Aorta (tissue), 5 donors: ENCODE measurements at regions of chr9 and their contacts with region 1.

Region 1: DNA sequence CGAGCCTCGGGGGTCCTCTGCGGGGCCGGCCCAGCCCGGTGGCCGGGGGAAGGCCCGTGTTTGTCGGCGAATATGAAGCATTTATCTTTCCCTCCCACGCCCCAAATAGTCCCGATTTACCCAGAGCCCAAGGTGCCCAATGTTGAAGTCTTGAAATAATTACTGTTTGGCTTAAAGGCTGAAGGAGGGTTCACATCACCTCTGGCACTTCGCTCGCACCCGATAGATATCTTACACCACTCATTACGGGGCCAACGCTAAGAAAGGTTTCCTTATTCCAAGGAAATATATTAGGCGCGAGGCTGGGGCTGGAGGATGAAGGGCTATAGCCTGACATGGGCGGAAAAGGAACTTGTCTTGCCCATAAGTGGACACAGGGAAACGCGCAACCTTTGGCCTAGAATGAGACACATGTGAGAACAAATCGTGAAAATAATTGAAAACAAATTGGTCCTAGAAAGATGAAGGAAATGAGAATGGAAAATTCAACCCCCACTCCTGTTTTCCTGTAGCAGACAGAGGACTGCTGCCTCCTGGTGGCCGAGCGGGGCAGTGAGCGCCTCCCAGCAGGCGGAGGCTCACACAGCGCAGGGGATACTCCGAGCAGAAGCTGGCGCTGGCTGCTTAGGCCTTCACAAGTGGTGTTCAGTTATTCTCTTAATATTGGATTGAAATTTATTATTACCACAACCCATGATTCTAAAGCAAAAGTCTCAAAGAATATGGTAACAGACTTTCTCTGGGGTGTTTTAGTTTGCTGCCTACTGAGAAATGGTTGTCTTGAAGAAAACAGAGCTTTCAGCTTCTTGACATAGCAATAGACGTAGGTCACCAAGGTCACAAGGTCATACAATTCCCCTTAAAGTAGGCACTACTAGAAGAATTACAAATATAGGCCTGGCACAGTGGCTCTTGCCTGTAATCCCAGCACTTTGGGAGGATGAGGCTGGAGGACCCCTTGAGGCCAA is 7.9 kb downstream of the CCL21 start:
- DNase-seq: peak; percentile 90 to 97
- ATAC-seq: peak; percentile 96
- H3K4me3 ChIP-seq: peak overlapping the region; percentile 61 to 92
- H3K27ac ChIP-seq: peak overlapping the region; percentile 52 to 68
- H3K4me1 ChIP-seq: no peaks in the 10 kb centered on the region
- H3K27me3 ChIP-seq: no peaks in the 10 kb centered on the region

Region 2: GRCh38 chr9:34637356-34638137 is 64.5 kb before region 1 on chr9 and contains the start of gene SIGMAR1:
- intact Hi-C with region 1: loop called in 1 of 2 experiments (anchors 5 kb)
- DNase-seq: peak; percentile 97 to 98
- ATAC-seq: peak; percentile 98
- H3K4me3 ChIP-seq: peak within 1 kb of the TSS; percentile 19 to 49
- H3K27ac ChIP-seq: peak within 1 kb of the TSS; percentile 6 to 30
- H3K4me1 ChIP-seq: no peaks in the 10 kb centered on the region
- H3K27me3 ChIP-seq: no peaks in the 10 kb centered on the region
- total RNA-seq, gene SIGMAR1: 31.8 to 42.9 TPM

Region 3: DNA sequence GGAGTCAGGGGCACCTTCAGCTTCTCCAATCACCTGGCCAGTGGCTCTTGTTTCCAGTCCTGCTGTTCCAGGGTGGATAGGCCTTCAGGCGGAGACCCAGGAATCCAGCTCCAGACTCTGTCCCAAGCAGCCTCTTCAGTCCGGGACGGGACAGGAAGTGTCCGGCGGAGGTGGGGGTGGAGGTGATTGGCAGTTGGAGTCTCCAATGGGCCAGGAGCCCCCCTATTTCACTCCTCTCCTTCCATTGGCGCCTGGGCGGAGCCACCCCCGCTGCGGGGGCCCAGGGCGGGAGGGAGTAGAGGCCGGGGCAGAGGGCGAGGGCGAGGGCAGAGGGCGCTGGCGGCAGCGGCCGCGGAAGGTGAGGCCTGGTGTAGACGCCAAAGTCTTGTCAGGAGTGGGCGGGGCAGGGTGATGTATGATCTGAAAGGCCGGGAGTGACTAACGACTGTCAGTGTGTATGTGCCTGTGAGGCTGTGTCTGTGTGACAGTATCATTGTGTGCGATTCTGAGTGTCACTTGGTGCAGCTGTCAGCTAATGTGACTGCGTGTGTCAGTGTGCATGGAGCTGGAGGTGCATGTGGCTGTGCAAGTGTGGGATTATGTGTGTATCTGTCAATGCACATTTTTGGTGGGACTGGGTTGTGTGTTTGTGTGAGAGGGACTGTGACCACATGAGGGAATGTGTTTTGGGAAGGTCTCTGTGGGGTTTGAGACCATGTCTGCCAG is 50.0 kb before region 1 on chr9 and contains the start of gene IL11RA:
- intact Hi-C with region 1: loop called in 1 of 2 experiments (anchors 5 kb)
- DNase-seq: peak; percentile 92 to 94
- ATAC-seq: peak; percentile 78
- H3K4me3 ChIP-seq: peak within 1 kb of the TSS; percentile 24 to 47
- H3K27ac ChIP-seq: peak within 1 kb of the TSS; percentile 70 to 72
- H3K4me1 ChIP-seq: peaks cover 0 to 2% of the 10 kb centered on the region in 2 donors
- H3K27me3 ChIP-seq: no peaks in the 10 kb centered on the region
- total RNA-seq, gene IL11RA: 33.7 to 66.4 TPM

Region 4: GRCh38 chr9:34665381-34666250 is 36.4 kb before region 1 on chr9:
- intact Hi-C with region 1: loop called in 1 of 2 experiments (anchors 2 kb)
- DNase-seq: peak; percentile 96 to 98
- ATAC-seq: peak; percentile 95
- H3K4me3 ChIP-seq: peak overlapping the region; percentile 55 to 73
- H3K27ac ChIP-seq: peak overlapping the region; percentile 25 to 96
- H3K4me1 ChIP-seq: no peaks in the 10 kb centered on the region
- H3K27me3 ChIP-seq: no peaks in the 10 kb centered on the region